AG04450 (cell line): ENCODE measurements at regions of chr20 and their contacts with region 1.

Region 1: GRCh38 chr20:56439771-56440291 is 27.8 kb downstream of the CASS4 start:
- DNase-seq: peak; percentile 100
- H3K4me3 ChIP-seq: no peak overlapping the region
- H3K27ac ChIP-seq: peak overlapping the region; percentile 97
- H3K27me3 ChIP-seq: no peaks in the 10 kb centered on the region
- CTCF ChIP-seq: no peak

Region 2: DNA sequence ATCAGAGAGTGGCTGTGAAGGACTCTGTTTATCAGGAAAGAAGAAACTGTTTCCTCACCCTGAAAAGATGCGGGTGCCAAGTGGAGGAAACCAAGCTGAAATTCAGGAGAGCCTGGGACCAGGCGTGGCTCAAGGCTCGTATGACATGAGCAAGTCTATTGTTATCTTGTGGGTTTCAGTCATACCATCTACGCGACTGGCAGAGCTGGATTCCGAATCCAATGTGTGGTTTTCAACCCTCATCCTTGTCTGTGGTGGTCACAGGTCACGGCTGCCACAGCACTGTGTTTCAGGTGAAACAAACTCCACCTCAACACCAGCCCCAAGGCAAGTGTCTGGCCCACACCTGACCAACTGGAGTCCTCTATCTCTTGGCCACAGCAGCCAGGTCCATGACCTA is 182.2 kb before region 1 on chr20:
- CTCF ChIA-PET with region 1: no interaction called
- POLR2A ChIA-PET with region 1: no interaction called
- DNase-seq: no peak
- H3K4me3 ChIP-seq: no peak overlapping the region
- H3K27ac ChIP-seq: no peak overlapping the region
- H3K27me3 ChIP-seq: no peaks in the 10 kb centered on the region
- CTCF ChIP-seq: no peak

Region 3: GRCh38 chr20:56411759-56412472 is 27.9 kb before region 1 on chr20 and contains the start of gene CASS4:
- CTCF ChIA-PET with region 1: interaction called, 4 read pairs
- POLR2A ChIA-PET with region 1: interaction called, 42 read pairs
- DNase-seq: peak; percentile 63
- H3K4me3 ChIP-seq: peak within 1 kb of the TSS; percentile 66
- H3K27ac ChIP-seq: peak within 1 kb of the TSS; percentile 93
- H3K27me3 ChIP-seq: no peaks in the 10 kb centered on the region
- CTCF ChIP-seq: no peak
- polyA plus RNA-seq, gene CASS4: 36.8 and 41.0 TPM in 2 replicates

Region 4: DNA sequence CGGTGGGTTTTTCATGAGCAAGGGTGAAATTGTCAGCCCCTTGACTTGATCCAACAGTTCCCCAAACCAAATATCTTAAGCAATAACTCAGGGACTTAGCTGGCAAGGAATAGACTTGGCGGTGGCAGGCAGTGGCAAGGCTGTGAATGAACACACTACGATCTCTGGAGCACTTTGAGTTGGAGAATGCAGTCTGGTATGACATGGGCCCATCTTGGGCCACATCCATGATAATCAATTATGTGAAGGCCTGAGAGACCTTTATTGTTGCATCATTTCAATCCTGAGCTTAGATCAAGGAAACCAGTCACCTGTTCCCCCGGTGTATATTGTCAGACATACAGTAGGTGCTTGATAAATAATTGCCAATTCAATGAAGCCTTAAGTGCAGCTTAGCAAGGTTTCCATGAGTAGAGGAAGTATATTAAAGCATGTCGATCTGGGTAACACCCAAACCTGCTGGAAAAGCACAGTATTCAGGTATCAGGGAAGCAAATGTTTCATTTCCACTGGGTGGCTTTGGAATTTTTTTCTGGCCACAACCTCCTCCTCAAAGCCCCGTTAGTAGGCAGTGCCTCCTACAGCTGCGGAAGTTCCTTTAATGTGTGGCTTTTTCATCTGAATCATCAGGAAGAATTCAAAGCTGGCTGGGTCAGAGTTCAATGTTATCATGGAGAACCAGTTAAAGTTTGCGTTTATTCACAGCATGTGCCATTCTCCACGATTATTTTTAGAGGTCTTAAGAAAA is 17.6 kb before region 1 on chr20:
- CTCF ChIA-PET with region 1: interaction called, 3 read pairs
- POLR2A ChIA-PET with region 1: interaction called, 12 read pairs
- DNase-seq: peak; percentile 51
- H3K4me3 ChIP-seq: no peak overlapping the region
- H3K27ac ChIP-seq: peak overlapping the region; percentile 78
- H3K27me3 ChIP-seq: no peaks in the 10 kb centered on the region
- CTCF ChIP-seq: no peak

Region 5: DNA sequence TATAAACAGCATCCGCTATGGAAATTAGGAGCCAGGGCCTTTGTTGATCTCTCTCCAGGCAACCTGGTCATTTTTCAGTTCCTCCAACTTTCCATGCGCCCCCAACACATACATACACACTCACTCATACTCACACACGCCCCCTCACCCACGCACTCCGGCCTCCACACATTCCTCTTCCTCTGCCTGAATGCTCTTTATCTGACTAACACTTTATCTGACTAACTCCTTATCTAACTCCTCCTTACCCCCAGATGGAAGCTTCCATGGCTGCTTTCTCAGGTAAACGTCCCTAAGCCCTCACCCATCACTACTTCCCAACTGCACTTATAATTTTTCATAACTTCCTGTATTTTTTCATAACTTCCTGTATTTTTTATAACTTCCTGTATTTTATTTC is 10.3 kb before region 1 on chr20:
- CTCF ChIA-PET with region 1: interaction called, 7 read pairs
- POLR2A ChIA-PET with region 1: interaction called, 52 read pairs
- DNase-seq: no peak
- H3K4me3 ChIP-seq: no peak overlapping the region
- H3K27ac ChIP-seq: peak overlapping the region; percentile 91
- H3K27me3 ChIP-seq: no peaks in the 10 kb centered on the region
- CTCF ChIP-seq: no peak

Region 6: DNA sequence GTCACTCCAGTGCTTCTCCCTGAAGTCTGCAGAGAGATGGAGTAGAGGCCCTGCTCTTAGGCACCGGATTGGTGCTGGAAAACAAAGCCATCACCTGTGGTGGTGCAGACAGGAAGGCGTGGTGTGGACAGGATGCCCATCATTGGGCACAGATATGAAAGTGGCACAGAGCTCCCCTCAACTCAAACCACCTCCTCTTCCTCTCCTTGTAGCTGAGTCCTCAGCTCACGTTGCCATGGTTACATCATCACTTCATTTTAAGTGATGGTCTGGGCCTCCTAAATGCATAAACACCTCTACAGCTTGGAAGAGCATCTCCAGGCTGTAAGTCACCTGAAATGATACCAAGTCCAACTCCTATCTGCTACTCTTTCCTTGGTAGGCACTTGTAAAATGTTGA is 20.6 kb after region 1 on chr20:
- CTCF ChIA-PET with region 1: no interaction called
- POLR2A ChIA-PET with region 1: no interaction called
- DNase-seq: no peak
- H3K4me3 ChIP-seq: no peak overlapping the region
- H3K27ac ChIP-seq: no peak overlapping the region
- H3K27me3 ChIP-seq: no peaks in the 10 kb centered on the region
- CTCF ChIP-seq: no peak